ENCODE measurements at regions of chr1 and their contacts with region 1.

Region 1: GRCh38 chr1:3507636-3508275 is 53.3 kb downstream of the ARHGEF16 start:
- DNase-seq: no peak
- ATAC-seq: no peak
- H3K4me3 ChIP-seq: no peak overlapping the region
- H3K27ac ChIP-seq: no peak overlapping the region
- H3K4me1 ChIP-seq: peaks cover 18% of the 10 kb centered on the region
- H3K27me3 ChIP-seq: no peaks in the 10 kb centered on the region
- CTCF ChIP-seq: no peak

Region 2: DNA sequence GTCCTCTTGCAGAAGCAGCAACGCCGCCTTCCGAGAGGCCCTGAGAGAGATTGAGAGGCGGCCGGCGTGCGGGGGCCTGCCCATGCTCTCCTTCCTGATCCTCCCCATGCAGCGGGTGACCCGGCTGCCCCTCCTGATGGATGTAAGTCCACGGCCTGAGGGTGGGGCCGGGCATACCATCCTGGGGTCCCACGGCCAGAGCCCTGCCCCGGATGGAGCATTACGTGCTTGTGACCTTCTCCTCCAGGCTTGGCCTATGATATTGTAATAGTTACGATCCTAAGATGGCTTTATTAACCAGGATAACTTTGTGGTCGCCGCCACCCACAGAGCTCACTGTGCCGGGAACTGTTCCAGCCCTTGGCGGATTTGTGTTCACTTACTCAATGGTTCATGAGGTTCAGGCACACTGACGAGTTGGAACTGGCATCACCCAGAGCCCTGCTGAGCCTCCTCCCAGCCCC is 34.3 kb before region 1 on chr1:
- intact Hi-C with region 1: no loop called
- DNase-seq: peak in 1 of 2 donors; percentile 28
- ATAC-seq: no peak
- H3K4me3 ChIP-seq: no peak overlapping the region
- H3K27ac ChIP-seq: no peak overlapping the region
- H3K4me1 ChIP-seq: peaks cover 10% of the 10 kb centered on the region
- H3K27me3 ChIP-seq: no peaks in the 10 kb centered on the region
- CTCF ChIP-seq: no peak

Region 3: GRCh38 chr1:3529099-3529729 is 21.5 kb after region 1 on chr1:
- intact Hi-C with region 1: loop called in 1 of 2 experiments (anchors 2 kb)
- DNase-seq: peak; percentile 69 to 89
- ATAC-seq: peak; percentile 85 to 92 (median 88)
- H3K4me3 ChIP-seq: peak overlapping the region; percentile 71
- H3K27ac ChIP-seq: peak overlapping the region; percentile 75
- H3K4me1 ChIP-seq: peaks cover 19% of the 10 kb centered on the region
- H3K27me3 ChIP-seq: no peaks in the 10 kb centered on the region
- CTCF ChIP-seq: no peak

Region 4: DNA sequence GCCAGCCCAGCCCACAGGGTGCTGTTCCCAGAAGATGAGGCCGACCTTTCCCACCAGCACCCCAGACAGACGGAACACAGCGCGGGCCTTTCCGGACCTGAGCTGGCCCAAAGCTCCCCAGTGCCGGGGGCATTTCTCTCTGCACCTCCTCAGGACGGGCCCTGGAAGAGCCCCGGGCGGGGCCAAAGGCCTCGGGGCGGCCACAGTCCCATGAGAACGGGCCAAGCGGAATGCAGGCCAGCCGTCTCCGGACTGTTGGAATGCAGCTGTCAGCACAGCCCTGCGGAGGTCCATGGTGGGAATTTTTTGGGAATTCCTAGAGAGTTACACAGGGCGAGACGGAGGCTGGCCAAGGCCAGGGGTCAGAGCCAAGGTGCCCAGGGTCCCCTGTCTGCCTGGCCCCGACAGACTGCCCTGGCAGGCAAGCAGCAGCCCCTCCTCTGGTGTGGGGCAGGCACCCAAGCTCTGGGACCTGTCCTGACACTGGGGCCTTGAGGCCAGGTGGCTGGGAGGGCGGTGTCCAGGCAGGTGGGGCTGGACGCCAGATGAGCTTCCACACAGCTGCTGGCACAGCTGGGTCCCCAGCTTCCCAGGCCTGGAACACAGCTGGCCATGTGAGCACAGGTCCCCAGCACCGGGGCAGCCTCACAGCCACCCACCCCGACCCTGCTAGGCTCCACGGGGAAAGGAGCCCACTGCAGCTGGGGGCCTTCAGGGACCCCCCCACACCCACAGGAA is 40.6 kb after region 1 on chr1:
- intact Hi-C with region 1: no loop called
- DNase-seq: no peak
- ATAC-seq: no peak
- H3K4me3 ChIP-seq: no peak overlapping the region
- H3K27ac ChIP-seq: no peak overlapping the region
- H3K4me1 ChIP-seq: no peaks in the 10 kb centered on the region
- H3K27me3 ChIP-seq: peaks cover 0 to 67% (median 6%) of the 10 kb centered on the region in 3 donors
- CTCF ChIP-seq: no peak